ENCODE measurements at regions of chr7 and their contacts with region 1.

Region 1: GRCh38 chr7:41817386-41817785 is 114.5 kb upstream of the INHBA start:
- DNase-seq: no peak
- ATAC-seq: no peak
- H3K4me3 ChIP-seq: no peak overlapping the region
- H3K27ac ChIP-seq: no peak overlapping the region
- H3K4me1 ChIP-seq: no peaks in the 10 kb centered on the region
- H3K27me3 ChIP-seq: 0 out of 2 replicates have a peak, but pooled peaks cover 3% of the 10 kb centered on the region
- CTCF ChIP-seq: no peak
- POLR2A ChIP-seq: no peak
- RAD21 ChIP-seq: no peak

Region 2: DNA sequence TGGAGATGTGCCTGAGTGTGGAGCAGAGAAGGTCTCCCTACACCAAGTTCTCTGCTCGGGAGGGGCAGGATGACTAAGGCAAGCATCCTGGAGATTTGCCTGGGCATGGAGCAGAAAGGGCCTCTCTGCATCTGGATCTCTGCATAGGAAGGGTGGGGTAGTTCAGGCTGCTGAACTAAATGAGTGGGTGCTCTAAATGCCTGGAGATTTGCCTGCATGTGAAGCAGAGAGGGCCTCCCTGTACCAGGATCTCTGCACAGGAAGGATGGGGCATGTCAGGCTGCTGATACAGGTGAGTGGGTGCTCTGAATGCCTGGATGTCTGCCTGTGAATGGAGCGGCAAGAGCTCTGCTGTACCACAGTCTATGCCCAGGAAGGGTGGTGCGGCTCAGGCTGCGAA is 1001.9 kb before region 1 on chr7:
- CTCF ChIA-PET with region 1: no interaction called
- POLR2A ChIA-PET with region 1: no interaction called
- RAD21 ChIA-PET with region 1: no interaction called
- intact Hi-C with region 1: no loop called
- DNase-seq: no peak
- ATAC-seq: no peak
- H3K4me3 ChIP-seq: no peak overlapping the region
- H3K27ac ChIP-seq: no peak overlapping the region
- H3K4me1 ChIP-seq: no peaks in the 10 kb centered on the region
- H3K27me3 ChIP-seq: no peaks in the 10 kb centered on the region
- CTCF ChIP-seq: no peak
- POLR2A ChIP-seq: no peak
- RAD21 ChIP-seq: no peak

Region 3: GRCh38 chr7:41755096-41755495 is 62.3 kb before region 1 on chr7:
- CTCF ChIA-PET with region 1: no interaction called
- POLR2A ChIA-PET with region 1: no interaction called
- RAD21 ChIA-PET with region 1: no interaction called
- intact Hi-C with region 1: loop called (anchors 10 kb)
- DNase-seq: no peak
- ATAC-seq: no peak
- H3K4me3 ChIP-seq: no peak overlapping the region
- H3K27ac ChIP-seq: no peak overlapping the region
- H3K4me1 ChIP-seq: no peaks in the 10 kb centered on the region
- H3K27me3 ChIP-seq: no peaks in the 10 kb centered on the region
- CTCF ChIP-seq: no peak
- POLR2A ChIP-seq: no peak
- RAD21 ChIP-seq: no peak